Activated CD4-positive, alpha-beta memory T cell treated with anti-CD3 and anti-CD28 coated beads for 36 hours (primary cell): ENCODE measurements at regions of chr14 and their contacts with region 1.

Region 1: GRCh38 chr14:65438266-65438933 is 25.9 kb downstream of the FUT8 start:
- DNase-seq: no peak
- H3K4me3 Mint-ChIP-seq: no peak overlapping the region
- H3K27ac Mint-ChIP-seq: peak overlapping the region; percentile 76
- H3K4me1 Mint-ChIP-seq: peaks cover 32% of the 10 kb centered on the region
- H3K27me3 Mint-ChIP-seq: no peaks in the 10 kb centered on the region

Region 2: GRCh38 chr14:65453807-65454480 is 15.5 kb after region 1 on chr14:
- CTCF ChIA-PET with region 1: no interaction called
- POLR2A ChIA-PET with region 1: no interaction called
- intact Hi-C with region 1: no loop called
- DNase-seq: no peak
- H3K4me3 Mint-ChIP-seq: no peak overlapping the region
- H3K27ac Mint-ChIP-seq: no peak overlapping the region
- H3K4me1 Mint-ChIP-seq: peaks cover 13% of the 10 kb centered on the region
- H3K27me3 Mint-ChIP-seq: no peaks in the 10 kb centered on the region

Region 3: GRCh38 chr14:65478596-65478995 is 40.2 kb after region 1 on chr14:
- CTCF ChIA-PET with region 1: interaction called, 6 read pairs
- POLR2A ChIA-PET with region 1: no interaction called
- intact Hi-C with region 1: loop called (anchors 5 kb)
- DNase-seq: no peak
- H3K4me3 Mint-ChIP-seq: no peak overlapping the region
- H3K27ac Mint-ChIP-seq: no peak overlapping the region
- H3K4me1 Mint-ChIP-seq: peaks cover 70% of the 10 kb centered on the region
- H3K27me3 Mint-ChIP-seq: no peaks in the 10 kb centered on the region

Region 4: DNA sequence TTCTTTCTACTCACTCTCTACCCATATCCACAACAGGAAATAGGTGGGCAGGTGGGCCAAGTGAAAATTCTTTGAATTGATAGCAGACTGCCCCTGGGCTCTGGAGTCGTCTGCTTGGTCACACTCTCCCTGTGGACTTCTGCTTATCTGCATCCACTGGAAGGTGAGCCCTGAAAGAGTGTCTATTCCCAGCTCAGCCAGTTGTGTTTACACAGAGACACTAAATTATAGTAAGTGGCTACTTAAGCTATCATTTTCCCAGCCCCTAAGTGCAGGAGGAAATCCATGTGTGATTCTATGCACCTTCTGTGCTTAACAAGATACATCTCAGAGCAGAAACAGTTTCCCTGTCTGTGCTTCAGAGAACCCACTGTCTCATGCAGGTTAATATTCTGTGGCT is 312.5 kb after region 1 on chr14:
- CTCF ChIA-PET with region 1: no interaction called
- POLR2A ChIA-PET with region 1: no interaction called
- intact Hi-C with region 1: no loop called
- DNase-seq: no peak
- H3K4me3 Mint-ChIP-seq: no peak overlapping the region
- H3K27ac Mint-ChIP-seq: no peak overlapping the region
- H3K4me1 Mint-ChIP-seq: no peaks in the 10 kb centered on the region
- H3K27me3 Mint-ChIP-seq: no peaks in the 10 kb centered on the region